PC-9 (cell line): ENCODE measurements at regions of chr22 and their contacts with region 1.

Region 1: GRCh38 chr22:29184849-29185490 is 20.7 kb upstream of the EMID1 start:
- DNase-seq: no peak
- H3K4me3 ChIP-seq: no peak overlapping the region
- H3K27ac ChIP-seq: no peak overlapping the region
- H3K4me1 ChIP-seq: no peaks in the 10 kb centered on the region
- H3K27me3 ChIP-seq: no peaks in the 10 kb centered on the region
- CTCF ChIP-seq: no peak

Region 2: GRCh38 chr22:29072193-29072978 is 112.6 kb before region 1 on chr22:
- CTCF ChIA-PET with region 1: no interaction called
- POLR2A ChIA-PET with region 1: interaction called, 10 read pairs
- intact Hi-C with region 1: no loop called
- DNase-seq: peak; percentile 86 to 95
- H3K4me3 ChIP-seq: peak overlapping the region; percentile 35; the same call in 1 of the 2 replicates
- H3K27ac ChIP-seq: no peak overlapping the region
- H3K4me1 ChIP-seq: 0 out of 2 replicates have a peak, but pooled peaks cover 5% of the 10 kb centered on the region
- H3K27me3 ChIP-seq: no peaks in the 10 kb centered on the region
- CTCF ChIP-seq: no peak